ENCODE measurements at regions of chr1 and their contacts with region 1.

Region 1: DNA sequence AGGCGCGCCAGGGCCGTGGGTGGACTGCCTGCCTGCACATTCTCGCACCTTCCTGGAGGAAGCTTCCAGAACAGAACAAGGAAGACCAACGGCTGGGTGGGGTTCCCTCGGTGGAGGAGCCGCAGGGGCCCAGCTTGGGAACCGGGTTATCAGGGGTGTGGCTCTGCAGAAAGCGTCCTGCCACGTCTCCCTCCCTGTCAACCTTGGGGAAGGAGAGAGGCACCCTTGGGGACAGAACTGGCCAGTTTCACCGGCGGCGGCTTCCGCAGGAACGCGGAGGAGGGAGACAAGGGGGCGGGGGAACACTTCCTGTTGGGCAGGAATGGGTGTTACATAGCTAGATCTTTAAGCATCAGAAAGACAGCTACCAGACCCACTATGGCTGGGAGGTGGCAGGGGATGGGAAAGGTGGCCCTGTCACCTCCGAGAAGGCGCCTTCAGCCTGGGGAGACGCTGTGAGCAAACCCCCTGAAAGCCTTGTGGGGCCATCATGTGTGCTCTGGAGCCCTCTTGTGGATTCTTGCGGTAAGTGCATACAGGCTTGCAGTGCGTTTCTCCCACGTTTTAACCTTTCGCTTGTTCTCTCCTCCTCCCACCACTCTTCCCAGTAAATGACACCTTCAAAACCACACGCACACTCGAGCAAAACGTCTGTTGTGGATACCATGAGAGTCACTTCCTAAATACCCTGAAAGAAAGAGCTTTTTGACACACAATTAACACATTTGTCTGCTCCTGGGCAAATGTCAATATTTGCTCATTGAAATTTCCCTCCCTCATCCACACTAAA is 3.8 kb upstream of the PLEKHA6 start:
- DNase-seq: peak; percentile 83
- ATAC-seq: peak; percentile 87
- H3K4me3 Mint-ChIP-seq: peak overlapping the region; percentile 48
- H3K27ac Mint-ChIP-seq: peak overlapping the region; percentile 51
- H3K4me1 Mint-ChIP-seq: peaks cover 12% of the 10 kb centered on the region
- H3K27me3 Mint-ChIP-seq: peaks cover 8% of the 10 kb centered on the region

Region 2: GRCh38 chr1:204162231-204163074 is 201.1 kb before region 1 on chr1:
- CTCF ChIA-PET with region 1: interaction called, 122 read pairs
- POLR2A ChIA-PET with region 1: no interaction called
- DNase-seq: peak; percentile 81
- ATAC-seq: peak; percentile 94
- H3K4me3 Mint-ChIP-seq: no peak overlapping the region
- H3K27ac Mint-ChIP-seq: no peak overlapping the region
- H3K4me1 Mint-ChIP-seq: no peaks in the 10 kb centered on the region
- H3K27me3 Mint-ChIP-seq: peaks cover 6% of the 10 kb centered on the region

Region 3: GRCh38 chr1:204213668-204214662 is 149.6 kb before region 1 on chr1 and contains the start of gene GOLT1A:
- CTCF ChIA-PET with region 1: interaction called, 29 read pairs
- POLR2A ChIA-PET with region 1: no interaction called
- DNase-seq: peak; percentile 54
- ATAC-seq: peak; percentile 73
- H3K4me3 Mint-ChIP-seq: peak within 1 kb of the TSS; percentile 12
- H3K27ac Mint-ChIP-seq: no peak within 1 kb of the TSS
- H3K4me1 Mint-ChIP-seq: peaks cover 16% of the 10 kb centered on the region
- H3K27me3 Mint-ChIP-seq: peaks cover 15% of the 10 kb centered on the region
- total RNA-seq, gene GOLT1A: not detected

Region 4: GRCh38 chr1:204263254-204263910 is 100.1 kb before region 1 on chr1:
- CTCF ChIA-PET with region 1: interaction called, 63 read pairs
- POLR2A ChIA-PET with region 1: no interaction called
- DNase-seq: no peak
- ATAC-seq: no peak
- H3K4me3 Mint-ChIP-seq: no peak overlapping the region
- H3K27ac Mint-ChIP-seq: no peak overlapping the region
- H3K4me1 Mint-ChIP-seq: no peaks in the 10 kb centered on the region
- H3K27me3 Mint-ChIP-seq: no peaks in the 10 kb centered on the region

Region 5: GRCh38 chr1:204341380-204341779 is 22.1 kb before region 1 on chr1:
- CTCF ChIA-PET with region 1: interaction called, 12 read pairs
- POLR2A ChIA-PET with region 1: no interaction called
- DNase-seq: no peak
- ATAC-seq: no peak
- H3K4me3 Mint-ChIP-seq: no peak overlapping the region
- H3K27ac Mint-ChIP-seq: no peak overlapping the region
- H3K4me1 Mint-ChIP-seq: no peaks in the 10 kb centered on the region
- H3K27me3 Mint-ChIP-seq: peaks cover 5% of the 10 kb centered on the region

Region 6: DNA sequence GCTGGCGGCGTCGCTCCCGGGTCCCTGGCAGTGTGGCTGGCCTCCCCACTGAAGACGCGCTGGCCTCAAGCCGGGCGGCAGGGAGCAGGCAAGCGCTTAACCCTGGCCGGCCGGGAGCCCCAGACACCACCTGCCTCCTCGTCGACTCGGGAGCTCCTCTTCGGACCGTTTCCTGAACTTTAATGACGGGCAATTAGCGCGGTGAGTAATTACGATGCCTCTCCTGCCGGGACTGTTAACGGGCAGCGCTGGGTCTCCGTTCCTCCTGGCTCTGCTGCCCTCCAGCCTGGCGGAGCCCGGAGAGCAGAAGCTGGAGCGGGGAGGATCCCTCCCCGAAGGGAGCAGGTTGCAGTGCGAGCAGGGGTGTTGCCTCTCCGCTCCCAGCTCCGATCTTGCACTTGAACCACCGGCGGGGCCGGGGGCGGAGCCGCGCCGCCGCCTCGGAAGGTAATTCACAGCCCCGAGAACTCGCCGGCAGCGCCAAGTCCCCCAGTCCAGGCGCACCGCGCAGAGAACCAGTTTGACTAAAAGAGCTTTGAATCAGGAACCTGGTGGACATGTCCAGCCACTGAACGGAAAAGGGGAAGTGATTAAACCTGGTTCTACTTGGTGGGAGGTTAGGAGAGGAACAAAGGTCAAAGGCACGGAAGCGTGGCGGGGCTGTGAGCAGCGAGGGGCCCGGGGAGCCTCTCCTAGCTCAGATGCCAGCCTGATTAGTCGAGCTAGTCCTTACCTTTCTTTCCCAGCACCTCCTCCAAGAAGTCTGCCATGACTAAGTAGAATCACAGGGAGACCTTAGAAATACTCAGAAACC is 14.5 kb after region 1 on chr1:
- CTCF ChIA-PET with region 1: interaction called, 41 read pairs
- POLR2A ChIA-PET with region 1: no interaction called
- DNase-seq: peak; percentile 52
- ATAC-seq: peak; percentile 82
- H3K4me3 Mint-ChIP-seq: peak overlapping the region; percentile 77
- H3K27ac Mint-ChIP-seq: no peak overlapping the region
- H3K4me1 Mint-ChIP-seq: peaks cover 13% of the 10 kb centered on the region
- H3K27me3 Mint-ChIP-seq: peaks cover 26% of the 10 kb centered on the region